ENCODE measurements at regions of chr1 and their contacts with region 1.

Region 1: GRCh38 chr1:32200226-32201010 is at the start of gene CCDC28B:
- DNase-seq: peak; percentile 55 to 75
- ATAC-seq: peak; percentile 54 to 71 (median 55)
- H3K4me3 ChIP-seq: peak within 1 kb of the TSS; percentile 71
- H3K4me3 Mint-ChIP-seq: peak within 1 kb of the TSS; percentile 95
- H3K27ac ChIP-seq: peak within 1 kb of the TSS; percentile 93
- H3K27ac Mint-ChIP-seq: peak within 1 kb of the TSS; percentile 93 to 98
- H3K4me1 ChIP-seq: peaks cover 70% of the 10 kb centered on the region
- H3K4me1 Mint-ChIP-seq: peaks cover 51 to 69% of the 10 kb centered on the region in 2 donors
- H3K27me3 ChIP-seq: no peaks in the 10 kb centered on the region
- H3K27me3 Mint-ChIP-seq: no peaks in the 10 kb centered on the region
- CTCF ChIP-seq: no peak
- total RNA-seq, gene CCDC28B: 19.3 to 30.6 (median 19.8) TPM

Region 2: DNA sequence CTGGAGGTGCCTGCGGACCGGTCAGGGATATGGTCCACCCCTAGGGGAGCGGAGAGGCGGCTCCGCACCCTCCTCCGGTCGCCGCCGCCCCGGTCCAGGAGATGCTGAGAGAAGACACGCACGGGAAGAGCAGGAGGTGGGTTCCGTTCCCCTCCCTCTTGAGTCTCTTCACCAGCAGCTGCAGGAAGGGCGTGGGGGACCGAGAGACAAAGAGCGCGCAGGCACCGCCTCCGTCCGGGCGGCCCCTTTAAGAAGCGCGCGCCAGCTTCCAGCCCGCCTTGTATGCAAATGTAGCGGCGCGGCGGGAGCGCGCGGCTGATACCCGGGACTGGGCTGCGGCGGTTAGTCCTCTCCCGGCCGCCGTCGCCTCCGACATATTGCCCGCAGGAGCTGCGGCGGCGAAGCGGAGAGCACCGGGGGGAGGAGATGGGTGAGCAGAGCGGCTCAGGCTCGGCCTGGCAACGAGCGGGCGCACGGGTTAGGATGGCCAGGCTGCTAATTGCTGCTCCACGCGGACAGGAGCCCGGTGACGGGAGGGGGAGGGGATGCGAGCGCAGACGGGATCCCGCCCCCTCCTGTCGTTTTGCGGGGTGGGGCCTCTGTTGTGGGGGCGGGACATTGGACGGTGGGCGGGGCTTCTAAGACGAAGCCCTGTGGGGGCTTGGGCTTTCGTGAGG is 127.7 kb before region 1 on chr1 and contains the start of gene TMEM39B:
- intact Hi-C with region 1: loop called (anchors 2 kb)
- DNase-seq: peak; percentile 93 to 96
- ATAC-seq: peak; percentile 86 to 95 (median 88)
- H3K4me3 ChIP-seq: peak within 1 kb of the TSS; percentile 90
- H3K4me3 Mint-ChIP-seq: peak within 1 kb of the TSS; percentile 97
- H3K27ac ChIP-seq: peak within 1 kb of the TSS; percentile 77
- H3K27ac Mint-ChIP-seq: peak within 1 kb of the TSS; percentile 87 to 89
- H3K4me1 ChIP-seq: peaks cover 23% of the 10 kb centered on the region
- H3K4me1 Mint-ChIP-seq: peaks cover 25 to 29% of the 10 kb centered on the region in 2 donors
- H3K27me3 ChIP-seq: no peaks in the 10 kb centered on the region
- H3K27me3 Mint-ChIP-seq: no peaks in the 10 kb centered on the region
- CTCF ChIP-seq: no peak
- total RNA-seq, gene TMEM39B: 13.3 to 17.1 (median 15.8) TPM

Region 3: DNA sequence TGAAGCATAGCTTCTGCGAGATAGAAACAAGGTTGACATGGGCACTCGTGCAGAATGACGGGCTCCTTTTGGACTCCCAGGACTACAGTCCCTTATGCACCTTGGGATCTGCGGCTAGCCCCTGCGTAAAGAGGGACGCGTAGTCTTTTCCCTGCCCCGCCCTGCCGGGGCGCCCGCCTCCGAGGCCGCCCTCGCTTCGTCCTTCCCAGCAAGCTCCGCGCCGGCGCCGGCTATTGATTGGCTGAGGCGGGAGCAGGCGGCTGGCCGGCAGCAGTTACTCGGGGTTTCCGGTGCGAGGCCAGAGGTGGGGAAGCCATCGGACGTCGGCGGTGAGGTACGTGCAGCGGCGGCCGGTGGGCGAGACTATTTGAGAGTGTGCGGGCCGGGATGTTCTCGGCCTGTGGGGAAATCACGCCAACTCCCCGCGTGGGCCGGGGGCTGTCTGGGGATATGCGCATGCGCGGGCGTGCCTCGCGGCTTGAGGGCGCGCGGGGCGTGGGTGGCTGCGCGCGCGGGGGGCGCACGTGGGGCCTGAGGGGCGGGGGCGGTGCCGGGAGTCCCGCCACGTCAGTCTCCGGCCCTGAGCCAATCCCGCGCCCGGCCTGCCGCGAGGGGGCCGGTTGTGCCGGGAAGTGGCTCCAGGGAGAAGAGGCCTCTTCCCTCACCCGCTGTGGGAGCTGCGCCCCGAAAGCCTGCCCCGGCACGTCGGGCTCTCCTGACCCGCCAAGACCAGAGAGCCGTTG is 20.8 kb before region 1 on chr1 and contains the start of gene TXLNA:
- intact Hi-C with region 1: loop called (anchors 1 kb)
- DNase-seq: peak; percentile 87 to 92
- ATAC-seq: peak; percentile 86 to 93 (median 88)
- H3K4me3 ChIP-seq: peak within 1 kb of the TSS; percentile 70
- H3K4me3 Mint-ChIP-seq: peak within 1 kb of the TSS; percentile 95
- H3K27ac ChIP-seq: peak within 1 kb of the TSS; percentile 80
- H3K27ac Mint-ChIP-seq: peak within 1 kb of the TSS; percentile 95 to 98
- H3K4me1 ChIP-seq: peaks cover 28% of the 10 kb centered on the region
- H3K4me1 Mint-ChIP-seq: peaks cover 35 to 43% of the 10 kb centered on the region in 2 donors
- H3K27me3 ChIP-seq: no peaks in the 10 kb centered on the region
- H3K27me3 Mint-ChIP-seq: no peaks in the 10 kb centered on the region
- CTCF ChIP-seq: no peak
- total RNA-seq, gene TXLNA: 26.0 to 36.0 (median 33.3) TPM

Region 4: DNA sequence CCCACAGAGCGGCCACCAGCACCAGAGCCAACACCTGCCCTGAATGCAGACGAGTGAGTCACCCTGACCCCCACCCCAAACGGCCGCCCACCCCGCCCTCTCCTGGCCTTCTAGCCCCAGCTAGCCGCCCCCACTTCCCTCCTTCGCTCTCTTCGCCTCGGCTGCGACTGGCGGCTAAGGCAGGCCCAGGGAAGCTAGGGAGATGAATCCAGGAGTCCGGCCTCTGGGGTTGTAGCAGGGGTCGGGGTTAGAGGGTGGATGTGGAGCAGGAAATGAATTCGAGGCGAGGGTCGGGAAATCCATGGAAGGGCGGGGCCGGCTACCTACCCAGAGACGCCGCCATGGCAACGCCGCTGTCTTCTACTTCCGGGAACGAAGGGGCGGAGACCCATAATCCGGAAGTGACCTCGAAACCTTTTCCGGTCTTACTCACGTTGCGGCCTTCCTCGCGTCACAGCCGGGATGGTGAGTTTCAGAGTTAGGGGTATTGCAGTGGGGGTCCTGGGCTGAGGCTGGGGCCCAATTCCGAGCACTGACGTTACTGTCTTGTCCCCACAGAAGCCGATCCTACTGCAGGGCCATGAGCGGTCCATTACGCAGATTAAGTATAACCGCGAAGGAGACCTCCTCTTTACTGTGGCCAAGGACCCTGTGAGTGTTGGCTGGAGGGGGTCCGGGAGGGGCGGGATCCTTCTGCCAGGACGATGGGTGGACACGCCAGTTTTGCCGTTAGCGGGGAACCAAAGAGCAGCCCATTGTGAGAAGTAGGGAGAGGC is 21.8 kb after region 1 on chr1 and contains the starts of genes EIF3I and TMEM234:
- intact Hi-C with region 1: loop called (anchors 1 kb)
- DNase-seq: peak; percentile 86 to 97
- ATAC-seq: peak; percentile 89 to 96 (median 93)
- H3K4me3 ChIP-seq: peak within 1 kb of the TSS; percentile 54
- H3K4me3 Mint-ChIP-seq: peak within 1 kb of the TSS; percentile 92
- H3K27ac ChIP-seq: peak within 1 kb of the TSS; percentile 82
- H3K27ac Mint-ChIP-seq: peak within 1 kb of the TSS; percentile 92 to 96
- H3K4me1 ChIP-seq: peaks cover 30% of the 10 kb centered on the region
- H3K4me1 Mint-ChIP-seq: peaks cover 20 to 29% of the 10 kb centered on the region in 2 donors
- H3K27me3 ChIP-seq: no peaks in the 10 kb centered on the region
- H3K27me3 Mint-ChIP-seq: no peaks in the 10 kb centered on the region
- CTCF ChIP-seq: no peak
- total RNA-seq, gene EIF3I: 107 to 126 (median 110) TPM
- total RNA-seq, gene TMEM234: 22.2 to 27.1 (median 24.7) TPM

Region 5: GRCh38 chr1:32413507-32414185 is 213.2 kb after region 1 on chr1:
- intact Hi-C with region 1: loop called (anchors 5 kb)
- DNase-seq: peak; percentile 48 to 92
- ATAC-seq: peak; percentile 81 to 85 (median 85)
- H3K4me3 ChIP-seq: no peak overlapping the region
- H3K4me3 Mint-ChIP-seq: no peak overlapping the region
- H3K27ac ChIP-seq: no peak overlapping the region
- H3K27ac Mint-ChIP-seq: no peak overlapping the region
- H3K4me1 ChIP-seq: no peaks in the 10 kb centered on the region
- H3K4me1 Mint-ChIP-seq: peaks cover 0 to 4% of the 10 kb centered on the region in 2 donors
- H3K27me3 ChIP-seq: no peaks in the 10 kb centered on the region
- H3K27me3 Mint-ChIP-seq: peaks cover 8 to 23% of the 10 kb centered on the region in 2 donors
- CTCF ChIP-seq: peak; percentile 90